ENCODE measurements at regions of chr16 and their contacts with region 1.

Region 1: DNA sequence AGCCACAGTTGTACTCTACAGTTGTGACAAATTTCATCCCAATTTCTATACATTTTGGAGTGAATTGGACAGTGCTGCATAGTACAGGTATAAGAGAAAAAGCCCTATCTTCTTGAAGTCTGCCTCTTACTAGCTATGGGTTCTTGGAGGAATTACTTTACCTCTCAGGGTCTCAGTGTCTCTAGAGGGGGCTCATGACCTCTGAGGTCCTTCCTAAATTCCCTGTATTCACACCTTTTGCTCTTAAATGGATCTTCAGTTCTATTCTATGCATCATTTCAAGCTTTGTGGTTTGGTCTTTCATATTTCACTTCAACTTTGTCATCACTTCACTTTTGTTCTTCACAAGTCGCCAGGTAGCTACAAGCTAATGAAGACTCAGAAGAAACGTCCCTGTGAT is 71.2 kb upstream of the ERCC4 start:
- DNase-seq: no peak
- ATAC-seq: no peak
- H3K4me3 ChIP-seq: no peak overlapping the region
- H3K4me3 Mint-ChIP-seq: no peak overlapping the region
- H3K27ac ChIP-seq: no peak overlapping the region
- H3K27ac Mint-ChIP-seq: no peak overlapping the region
- H3K4me1 ChIP-seq: no peaks in the 10 kb centered on the region
- H3K4me1 Mint-ChIP-seq: no peaks in the 10 kb centered on the region
- H3K27me3 ChIP-seq: peaks cover 0 to 8% of the 10 kb centered on the region in 2 experiments
- H3K27me3 Mint-ChIP-seq: peaks cover 30% of the 10 kb centered on the region
- CTCF ChIP-seq: no peak

Region 2: GRCh38 chr16:13779676-13780075 is 69.1 kb before region 1 on chr16:
- CTCF ChIA-PET with region 1: no interaction called
- POLR2A ChIA-PET with region 1: no interaction called
- intact Hi-C with region 1: loop called in 1 of 2 experiments (anchors 10 kb)
- DNase-seq: no peak
- ATAC-seq: no peak
- H3K4me3 ChIP-seq: no peak overlapping the region
- H3K4me3 Mint-ChIP-seq: no peak overlapping the region
- H3K27ac ChIP-seq: no peak overlapping the region
- H3K27ac Mint-ChIP-seq: no peak overlapping the region
- H3K4me1 ChIP-seq: no peaks in the 10 kb centered on the region
- H3K4me1 Mint-ChIP-seq: no peaks in the 10 kb centered on the region
- H3K27me3 ChIP-seq: no peaks in the 10 kb centered on the region
- H3K27me3 Mint-ChIP-seq: no peaks in the 10 kb centered on the region
- CTCF ChIP-seq: no peak